CD8-positive, alpha-beta T cell (primary cell): ENCODE measurements at regions of chr1 and their contacts with region 1.

Region 1: GRCh38 chr1:150186789-150187559 is 37.3 kb downstream of the PLEKHO1 start:
- DNase-seq: peak in 5 of 9 experiments; percentile 5 to 85 (median 12)
- ATAC-seq: peak; percentile 78
- H3K4me3 ChIP-seq: no peak overlapping the region
- H3K4me3 Mint-ChIP-seq: peak overlapping the region; percentile 32
- H3K27ac ChIP-seq: peak overlapping the region in 1 of 2 experiments; percentile 33
- H3K27ac Mint-ChIP-seq: no peak overlapping the region
- H3K4me1 ChIP-seq: peaks cover 5% of the 10 kb centered on the region
- H3K4me1 Mint-ChIP-seq: peaks cover 7% of the 10 kb centered on the region
- H3K27me3 ChIP-seq: no peaks in the 10 kb centered on the region
- H3K27me3 Mint-ChIP-seq: no peaks in the 10 kb centered on the region
- CTCF ChIP-seq: peak; percentile 91

Region 2: GRCh38 chr1:150162862-150163706 is 23.9 kb before region 1 on chr1:
- CTCF ChIA-PET with region 1: interaction called, 19 read pairs
- POLR2A ChIA-PET with region 1: interaction called, 4 read pairs
- intact Hi-C with region 1: loop called in 1 of 2 experiments (anchors 1 kb)
- DNase-seq: peak in 1 of 9 experiments; percentile 46
- ATAC-seq: peak; percentile 45
- H3K4me3 ChIP-seq: no peak overlapping the region
- H3K4me3 Mint-ChIP-seq: peak overlapping the region; percentile 6
- H3K27ac ChIP-seq: no peak overlapping the region
- H3K27ac Mint-ChIP-seq: peak overlapping the region; percentile 10
- H3K4me1 ChIP-seq: peaks cover 46% of the 10 kb centered on the region
- H3K4me1 Mint-ChIP-seq: peaks cover 43% of the 10 kb centered on the region
- H3K27me3 ChIP-seq: no peaks in the 10 kb centered on the region
- H3K27me3 Mint-ChIP-seq: no peaks in the 10 kb centered on the region
- CTCF ChIP-seq: no peak

Region 3: DNA sequence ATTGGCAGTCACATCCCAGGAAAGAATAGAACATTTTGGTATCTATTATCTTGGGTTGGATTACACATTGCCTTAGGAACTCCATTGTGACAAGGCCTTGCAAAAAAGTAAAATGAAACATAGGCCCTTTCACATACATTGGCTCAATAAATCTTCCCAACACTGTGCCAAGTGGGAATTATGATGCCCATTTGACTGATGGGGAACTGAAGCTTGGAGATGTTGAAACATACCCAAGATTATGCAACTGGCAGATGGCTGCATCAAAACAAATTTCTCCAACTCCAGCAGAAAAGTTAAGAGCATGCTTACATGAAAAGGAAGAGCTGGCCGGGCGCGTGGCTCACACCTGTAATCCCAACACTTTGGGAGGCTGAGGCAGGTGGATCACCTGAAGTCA is 10.4 kb before region 1 on chr1:
- CTCF ChIA-PET with region 1: interaction called, 28 read pairs
- POLR2A ChIA-PET with region 1: no interaction called
- intact Hi-C with region 1: no loop called
- DNase-seq: no peak
- ATAC-seq: no peak
- H3K4me3 ChIP-seq: no peak overlapping the region
- H3K4me3 Mint-ChIP-seq: no peak overlapping the region
- H3K27ac ChIP-seq: no peak overlapping the region
- H3K27ac Mint-ChIP-seq: no peak overlapping the region
- H3K4me1 ChIP-seq: no peaks in the 10 kb centered on the region
- H3K4me1 Mint-ChIP-seq: no peaks in the 10 kb centered on the region
- H3K27me3 ChIP-seq: no peaks in the 10 kb centered on the region
- H3K27me3 Mint-ChIP-seq: no peaks in the 10 kb centered on the region
- CTCF ChIP-seq: no peak

Region 4: GRCh38 chr1:150213170-150214098 is 26.5 kb after region 1 on chr1:
- CTCF ChIA-PET with region 1: interaction called, 5 read pairs
- POLR2A ChIA-PET with region 1: no interaction called
- intact Hi-C with region 1: loop called in 1 of 2 experiments (anchors 1 kb)
- DNase-seq: peak; percentile 82 to 96 (median 92)
- ATAC-seq: peak; percentile 99
- H3K4me3 ChIP-seq: peak overlapping the region; percentile 54 to 62
- H3K4me3 Mint-ChIP-seq: peak overlapping the region; percentile 93
- H3K27ac ChIP-seq: peak overlapping the region; percentile 70 to 74
- H3K27ac Mint-ChIP-seq: peak overlapping the region; percentile 98
- H3K4me1 ChIP-seq: peaks cover 9% of the 10 kb centered on the region
- H3K4me1 Mint-ChIP-seq: peaks cover 13% of the 10 kb centered on the region
- H3K27me3 ChIP-seq: no peaks in the 10 kb centered on the region
- H3K27me3 Mint-ChIP-seq: no peaks in the 10 kb centered on the region
- CTCF ChIP-seq: peak; percentile 54

Region 5: GRCh38 chr1:150718225-150718891 is 531.4 kb after region 1 on chr1:
- CTCF ChIA-PET with region 1: no interaction called
- POLR2A ChIA-PET with region 1: no interaction called
- intact Hi-C with region 1: no loop called
- DNase-seq: peak in 2 of 9 experiments; percentile 22 to 46
- ATAC-seq: no peak
- H3K4me3 ChIP-seq: no peak overlapping the region
- H3K4me3 Mint-ChIP-seq: no peak overlapping the region
- H3K27ac ChIP-seq: no peak overlapping the region
- H3K27ac Mint-ChIP-seq: no peak overlapping the region
- H3K4me1 ChIP-seq: no peaks in the 10 kb centered on the region
- H3K4me1 Mint-ChIP-seq: no peaks in the 10 kb centered on the region
- H3K27me3 ChIP-seq: no peaks in the 10 kb centered on the region
- H3K27me3 Mint-ChIP-seq: peaks cover 3% of the 10 kb centered on the region
- CTCF ChIP-seq: no peak

Region 6: DNA sequence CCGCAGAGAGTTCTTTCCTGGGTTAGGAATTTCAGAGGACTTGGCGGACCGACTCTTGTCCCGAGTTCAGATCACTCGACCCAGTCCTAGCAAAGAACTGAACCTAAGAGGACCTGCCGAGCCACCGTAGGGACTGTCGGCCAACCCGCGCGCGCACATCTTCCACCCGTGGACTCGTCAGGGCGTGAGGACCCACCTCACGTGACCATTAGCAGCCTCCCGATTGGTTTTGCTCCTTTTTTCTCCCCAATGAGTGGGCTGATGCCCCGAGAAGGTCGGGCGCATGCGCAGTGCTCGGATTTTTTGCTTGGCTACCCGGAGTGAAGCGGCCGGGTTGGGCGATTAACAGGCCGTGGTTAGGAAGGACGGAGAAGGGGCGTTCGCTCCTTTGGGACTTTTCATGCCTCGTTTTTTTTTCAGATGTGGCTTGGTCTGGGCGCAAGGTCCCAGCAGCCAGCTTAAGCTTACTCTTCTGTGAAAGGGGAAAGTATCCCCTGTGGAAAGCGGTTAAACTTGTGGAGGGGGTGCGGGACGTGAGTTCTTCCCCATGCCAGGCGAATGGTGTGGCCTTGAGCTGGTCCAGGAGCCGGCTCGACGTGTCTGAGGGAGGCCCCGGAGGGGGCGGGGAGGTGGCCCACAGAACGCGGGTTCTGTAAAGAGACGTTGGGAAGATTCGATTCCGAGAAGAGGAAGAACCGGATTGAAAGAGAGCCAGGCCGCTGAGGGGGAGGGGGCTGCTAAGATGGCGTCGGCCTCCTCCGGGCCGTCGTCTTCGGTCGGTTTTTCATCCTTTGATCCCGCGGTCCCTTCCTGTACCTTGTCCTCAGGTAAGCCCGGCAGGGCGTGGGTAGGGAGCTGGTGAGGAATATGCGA is 1011.5 kb after region 1 on chr1 and contains the start of gene PIP5K1A:
- CTCF ChIA-PET with region 1: no interaction called
- POLR2A ChIA-PET with region 1: no interaction called
- intact Hi-C with region 1: no loop called
- DNase-seq: peak; percentile 96 to 100 (median 99)
- ATAC-seq: peak; percentile 94
- H3K4me3 ChIP-seq: peak within 1 kb of the TSS; percentile 88 to 91
- H3K4me3 Mint-ChIP-seq: peak within 1 kb of the TSS; percentile 97
- H3K27ac ChIP-seq: peak within 1 kb of the TSS; percentile 78 to 86
- H3K27ac Mint-ChIP-seq: peak within 1 kb of the TSS; percentile 92
- H3K4me1 ChIP-seq: peaks cover 28% of the 10 kb centered on the region
- H3K4me1 Mint-ChIP-seq: peaks cover 45% of the 10 kb centered on the region
- H3K27me3 ChIP-seq: no peaks in the 10 kb centered on the region
- H3K27me3 Mint-ChIP-seq: no peaks in the 10 kb centered on the region
- CTCF ChIP-seq: no peak
- total RNA-seq, gene PIP5K1A: 37.2 to 48.2 TPM